RWPE1 (cell line): ENCODE measurements at regions of chr7 and their contacts with region 1.

Region 1: DNA sequence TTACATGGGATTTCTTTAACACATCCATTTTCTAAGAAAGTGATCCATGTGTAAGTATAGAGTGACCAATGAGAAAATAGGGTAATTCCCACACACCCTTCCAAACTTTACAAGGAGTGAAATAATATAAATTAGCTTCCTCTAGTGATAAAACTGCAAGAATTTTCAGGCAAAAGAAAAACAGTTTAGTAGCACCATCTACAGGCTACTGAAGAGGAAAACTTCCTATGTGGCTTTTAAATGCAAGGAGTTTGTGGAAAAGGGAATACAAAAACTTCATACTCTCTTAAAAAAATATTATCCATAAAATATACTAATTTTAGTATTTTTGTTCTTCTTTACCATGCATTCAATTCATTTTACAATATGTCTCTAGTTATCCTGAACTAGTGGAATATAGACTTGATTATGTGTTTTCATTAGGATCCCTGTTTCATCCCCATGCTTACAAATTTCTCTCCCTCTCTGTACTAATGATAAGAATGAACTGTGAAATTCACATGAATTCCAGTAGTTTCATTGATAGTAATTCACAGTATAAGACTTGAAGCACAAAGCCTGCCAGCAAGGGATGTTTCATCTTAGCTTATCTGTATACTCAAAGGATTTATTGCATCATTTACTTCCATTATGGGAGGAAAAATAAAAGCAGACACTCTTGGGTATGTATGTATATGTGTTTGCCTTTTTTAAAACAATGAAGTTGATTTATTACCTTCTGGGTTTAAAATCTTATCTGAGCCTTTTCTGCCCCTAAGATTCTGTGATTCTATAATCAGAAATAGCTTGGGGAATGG is 442.9 kb downstream of the AUTS2 start:
- DNase-seq: no peak
- H3K27ac ChIP-seq: no peak overlapping the region
- CTCF ChIP-seq: 0 out of 2 replicates have a peak, but pooled peaks have one; percentile 12

Region 2: DNA sequence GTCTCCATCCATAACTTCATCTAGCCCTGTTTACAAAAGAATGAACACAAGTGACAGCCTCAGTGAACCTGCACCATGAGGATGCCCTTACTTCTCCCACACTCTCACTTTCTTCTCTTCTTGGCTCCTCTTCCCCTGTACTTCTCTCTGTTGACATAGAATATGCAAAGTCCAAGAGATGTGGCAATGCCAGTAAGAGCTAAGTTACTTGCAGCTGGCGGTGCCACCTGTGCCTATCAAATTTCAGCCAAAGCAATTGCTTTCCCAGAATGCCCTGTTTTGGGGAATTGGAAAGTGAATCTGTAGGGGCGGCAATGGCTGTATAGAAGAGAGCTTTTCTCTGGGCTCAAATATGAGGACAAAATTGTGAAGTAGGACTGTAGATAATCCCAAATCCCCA is 114.9 kb after region 1 on chr7:
- CTCF ChIA-PET with region 1: interaction called, 18 read pairs
- POLR2A ChIA-PET with region 1: no interaction called
- DNase-seq: no peak
- H3K27ac ChIP-seq: no peak overlapping the region
- CTCF ChIP-seq: no peak

Region 3: DNA sequence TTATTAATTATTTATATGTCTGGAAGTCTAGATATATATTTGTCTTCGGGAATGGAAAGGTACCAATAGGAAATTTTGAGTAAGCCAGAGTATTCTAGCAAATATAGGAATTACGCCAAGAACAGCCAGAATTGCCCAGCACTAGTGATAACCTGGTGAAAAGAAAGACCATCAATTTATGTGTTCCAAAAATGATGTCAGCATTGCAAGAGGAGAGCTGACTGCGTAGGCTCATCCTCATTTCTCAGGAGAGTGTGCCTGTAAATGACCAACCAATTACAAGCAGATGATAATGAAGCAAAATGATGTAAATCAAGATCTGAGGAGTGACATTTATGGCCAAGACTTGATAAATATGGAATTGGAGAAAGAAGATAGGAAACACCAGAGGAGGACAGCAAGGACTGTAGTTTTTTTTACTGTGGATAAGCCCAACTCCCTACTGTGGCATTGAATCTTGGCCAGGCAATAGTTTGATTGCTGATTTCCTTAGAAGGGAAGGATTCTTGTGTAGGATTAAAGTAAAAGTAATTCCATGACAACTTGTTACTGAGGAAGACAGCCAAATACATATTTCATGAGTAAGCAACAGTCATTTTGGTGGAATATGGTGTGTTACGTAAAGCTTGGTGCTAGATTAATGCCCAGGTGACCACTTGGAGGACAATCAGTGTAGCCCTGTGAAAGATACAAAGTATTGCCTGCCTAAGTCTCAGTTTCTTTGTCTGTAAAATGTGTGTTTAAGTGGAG is 147.9 kb after region 1 on chr7:
- CTCF ChIA-PET with region 1: no interaction called
- POLR2A ChIA-PET with region 1: no interaction called
- DNase-seq: no peak
- H3K27ac ChIP-seq: no peak overlapping the region
- CTCF ChIP-seq: no peak

Region 4: DNA sequence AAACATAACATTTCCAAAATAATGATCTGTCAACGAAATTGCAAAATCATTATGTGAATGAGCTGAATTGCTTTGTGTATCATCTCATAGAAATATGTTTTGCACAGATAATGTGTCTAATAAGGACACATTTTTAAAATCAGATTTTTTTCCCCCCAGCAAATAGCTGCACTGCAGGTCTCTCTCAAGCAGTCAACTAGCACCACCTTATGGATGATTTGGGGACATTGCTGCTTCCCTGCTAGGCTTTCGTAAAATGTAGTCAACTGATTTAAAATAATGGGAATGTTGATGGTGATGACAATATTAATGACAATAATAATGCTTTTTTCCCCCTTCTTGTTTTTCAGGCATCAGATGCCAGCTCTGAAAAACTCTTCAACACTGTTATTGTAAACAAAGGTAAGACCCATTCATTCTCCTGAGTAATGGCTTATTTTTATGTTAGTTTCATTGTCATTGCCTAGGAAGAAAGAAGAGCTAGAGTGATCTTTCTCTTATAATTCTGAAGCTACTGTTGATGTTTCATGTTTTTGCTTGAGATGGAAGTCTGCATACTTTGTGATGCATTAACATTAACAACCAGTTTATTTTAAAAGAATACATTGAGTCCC is 657.2 kb after region 1 on chr7:
- CTCF ChIA-PET with region 1: interaction called, 17 read pairs
- POLR2A ChIA-PET with region 1: no interaction called
- DNase-seq: peak; percentile 54
- H3K27ac ChIP-seq: no peak overlapping the region
- CTCF ChIP-seq: peak; percentile 86